Dorsolateral prefrontal cortex (tissue), 120 donors: ENCODE measurements at regions of chr19 and their contacts with region 1.

Region 1: GRCh38 chr19:44164673-44165512 is at the start of gene ZNF226:
- DNase-seq: peak; percentile 83 to 99 (median 95)
- H3K4me3 ChIP-seq: peak within 1 kb of the TSS; percentile 46 to 97 (median 84)
- H3K27ac ChIP-seq: peak within 1 kb of the TSS; percentile 51 to 96 (median 90)
- H3K27me3 ChIP-seq: no peaks in the 10 kb centered on the region
- CTCF ChIP-seq: peak in 33 of 56 donors; percentile 5 to 45 (median 27)
- total RNA-seq, gene ZNF226: 33.2 to 72.4 (median 51.4) TPM

Region 2: GRCh38 chr19:43983912-43984686 is 180.8 kb before region 1 on chr19 and contains the start of gene ZNF155:
- intact Hi-C with region 1: loop called in 1 of 2 experiments (anchors 5 kb)
- DNase-seq: peak; percentile 88 to 97 (median 95)
- H3K4me3 ChIP-seq: peak within 1 kb of the TSS; percentile 43 to 86 (median 73)
- H3K27ac ChIP-seq: peak within 1 kb of the TSS in 42 of 59 donors; percentile 1 to 84 (median 50)
- H3K27me3 ChIP-seq: no peaks in the 10 kb centered on the region
- CTCF ChIP-seq: peak in 10 of 56 donors; percentile 5 to 35 (median 14)
- total RNA-seq, gene ZNF155: 6.7 to 16.6 (median 10.8) TPM

Region 3: DNA sequence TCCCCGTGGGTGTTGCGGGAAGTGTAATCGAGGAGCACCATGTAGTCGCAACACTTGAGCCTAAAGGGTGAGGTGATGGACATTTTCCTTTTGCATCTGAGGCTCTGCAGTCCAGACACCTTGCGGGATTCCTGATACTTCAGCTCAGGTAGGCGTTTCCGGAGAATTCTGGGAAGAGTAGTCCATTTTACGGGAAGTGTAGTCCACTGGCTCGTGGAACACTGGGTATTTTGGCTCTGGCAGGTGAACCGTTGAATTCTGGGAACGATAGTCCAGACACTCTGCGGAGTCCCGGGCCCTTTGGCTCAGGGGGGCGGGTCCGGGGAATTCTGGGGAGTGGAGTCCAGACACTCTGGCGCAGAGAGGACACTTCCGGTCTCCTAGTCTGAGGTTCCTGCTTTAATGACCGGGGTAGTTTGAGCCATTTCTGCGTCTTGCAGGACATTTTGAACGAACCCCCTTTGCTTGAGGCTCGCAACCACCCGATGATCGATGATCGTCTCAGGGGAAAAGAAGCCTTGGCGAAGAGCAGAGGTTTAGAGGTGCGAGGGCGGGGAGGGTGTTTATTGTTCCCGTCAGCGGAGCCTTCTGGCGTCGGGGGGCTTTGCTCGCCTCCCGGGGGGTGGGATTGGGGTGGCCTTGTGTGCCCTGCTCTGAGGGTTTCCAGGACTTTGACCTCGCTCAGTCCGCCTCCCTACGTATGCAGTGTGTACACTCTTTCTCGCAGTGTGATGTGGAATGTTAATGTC is 113.1 kb before region 1 on chr19 and contains the start of gene ZNF223:
- intact Hi-C with region 1: loop called in 1 of 2 experiments (anchors 2 kb)
- DNase-seq: peak; percentile 90 to 98 (median 96)
- H3K4me3 ChIP-seq: peak within 1 kb of the TSS; percentile 59 to 95 (median 83)
- H3K27ac ChIP-seq: peak within 1 kb of the TSS in 51 of 59 donors; percentile 7 to 88 (median 71)
- H3K27me3 ChIP-seq: peaks cover 0 to 17% (median 0%) of the 10 kb centered on the region in 45 donors
- CTCF ChIP-seq: peak in 21 of 56 donors; percentile 7 to 45 (median 28)
- total RNA-seq, gene ZNF223: 5.2 to 18.6 (median 10.3) TPM

Region 4: GRCh38 chr19:44113138-44113783 is 51.6 kb before region 1 on chr19 and contains the start of gene ZNF225:
- intact Hi-C with region 1: loop called (anchors 1 to 5 kb)
- DNase-seq: peak; percentile 96 to 99 (median 98)
- H3K4me3 ChIP-seq: peak within 1 kb of the TSS; percentile 59 to 98 (median 82)
- H3K27ac ChIP-seq: peak within 1 kb of the TSS in 50 of 59 donors; percentile 9 to 90 (median 70)
- H3K27me3 ChIP-seq: no peaks in the 10 kb centered on the region
- CTCF ChIP-seq: peak in 40 of 56 donors; percentile 3 to 56 (median 36)
- total RNA-seq, gene ZNF225: 4.5 to 14.2 (median 8.2) TPM

Region 5: GRCh38 chr19:44131955-44132354 is 32.9 kb before region 1 on chr19:
- intact Hi-C with region 1: no loop called
- DNase-seq: no peak
- H3K4me3 ChIP-seq: no peak overlapping the region
- H3K27ac ChIP-seq: no peak overlapping the region
- H3K27me3 ChIP-seq: no peaks in the 10 kb centered on the region
- CTCF ChIP-seq: no peak

Region 6: DNA sequence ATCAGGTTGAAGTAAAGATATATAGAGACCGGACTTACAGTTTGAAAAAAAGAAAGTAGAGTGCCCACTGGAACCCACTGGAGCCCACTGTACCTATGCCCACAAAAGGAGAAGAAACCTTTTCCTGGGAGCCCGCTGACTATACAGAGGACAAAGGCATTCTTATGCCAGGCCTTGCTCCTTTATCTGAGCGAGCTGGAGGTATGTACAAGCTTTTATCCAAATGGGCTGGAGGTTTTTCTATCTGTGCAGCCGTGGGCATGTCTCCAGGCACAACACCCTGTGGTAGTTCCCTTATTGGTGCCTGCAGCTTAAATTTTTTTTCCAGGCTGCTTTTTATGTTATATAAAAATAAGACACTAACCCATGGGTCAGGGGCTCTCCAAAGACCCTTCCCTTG is 15.1 kb before region 1 on chr19:
- intact Hi-C with region 1: no loop called
- DNase-seq: no peak
- H3K4me3 ChIP-seq: no peak overlapping the region
- H3K27ac ChIP-seq: no peak overlapping the region
- H3K27me3 ChIP-seq: no peaks in the 10 kb centered on the region
- CTCF ChIP-seq: no peak

Region 7: DNA sequence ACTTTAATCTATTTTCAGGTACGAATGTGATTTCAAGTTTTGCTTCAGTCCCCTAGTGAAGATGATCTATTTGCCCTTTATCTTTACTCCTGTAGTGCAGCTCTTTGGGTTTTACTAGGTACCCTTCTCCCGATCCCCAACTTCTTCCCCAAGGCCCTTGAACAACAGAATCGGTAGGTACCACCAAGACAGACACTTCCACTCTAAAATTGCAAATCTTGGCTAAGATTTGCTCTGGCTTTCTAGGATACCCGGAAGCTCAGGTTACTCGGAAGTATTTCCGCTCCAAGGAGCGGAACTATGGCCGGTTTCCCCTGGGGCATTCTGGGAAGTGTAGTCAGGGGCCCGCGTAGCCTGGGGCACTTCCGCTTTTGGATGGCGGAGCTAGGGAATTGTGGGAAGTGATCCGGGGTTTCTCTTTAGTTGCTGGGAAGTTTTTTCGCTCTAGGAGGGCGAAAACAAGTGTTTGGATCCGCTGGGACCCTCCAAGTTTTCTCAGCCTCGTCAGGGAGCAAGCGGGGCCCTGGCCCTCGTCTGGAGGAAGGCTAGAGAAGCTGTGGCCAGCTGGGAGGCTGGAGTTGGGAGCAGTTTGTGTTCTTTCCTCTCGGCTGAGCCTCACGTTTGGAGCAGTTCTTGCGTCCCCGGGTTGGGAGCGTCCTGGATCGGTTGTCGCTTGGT is 42.4 kb after region 1 on chr19:
- intact Hi-C with region 1: loop called (anchors 1 kb)
- DNase-seq: peak; percentile 76 to 91 (median 88)
- H3K4me3 ChIP-seq: peak overlapping the region; percentile 62 to 99 (median 88)
- H3K27ac ChIP-seq: peak overlapping the region; percentile 1 to 98 (median 89)
- H3K27me3 ChIP-seq: peaks cover 0 to 5% (median 0%) of the 10 kb centered on the region in 45 donors
- CTCF ChIP-seq: peak in 21 of 56 donors; percentile 8 to 47 (median 21)

Region 8: DNA sequence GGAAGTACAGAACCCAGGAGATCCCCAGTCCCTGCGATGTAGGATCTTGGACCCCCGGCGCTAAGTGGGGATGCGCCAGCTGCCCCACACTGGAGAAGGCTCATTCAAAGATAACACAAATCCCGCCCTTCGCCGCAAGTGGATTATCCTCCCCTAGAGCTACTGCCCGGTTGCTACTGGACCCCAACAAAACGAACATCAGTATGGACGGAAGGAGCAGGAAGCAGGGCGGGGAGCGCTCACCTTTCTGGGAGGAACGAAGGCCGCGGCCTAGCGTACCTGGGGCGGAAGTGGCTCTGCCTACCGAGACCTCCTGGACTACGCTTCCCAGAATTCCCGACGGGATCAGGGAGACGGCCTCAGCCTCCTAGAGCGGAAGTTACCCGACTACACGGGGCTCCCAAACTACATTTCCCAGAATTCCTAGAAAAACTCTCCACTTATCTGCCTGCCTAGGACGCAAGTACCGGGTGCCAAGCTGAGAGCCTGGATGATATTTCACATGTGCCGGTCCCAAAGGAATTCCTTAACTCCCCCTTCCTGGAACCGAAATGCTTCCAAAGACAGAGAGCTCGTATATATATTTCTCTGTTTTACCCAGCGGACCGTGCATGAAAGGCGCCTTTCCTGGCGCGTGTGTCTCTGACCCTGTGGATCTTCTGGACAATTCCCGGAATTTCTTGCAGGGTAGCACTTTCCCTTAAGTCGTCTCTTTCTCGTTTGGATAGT is 191.7 kb after region 1 on chr19 and contains the start of gene ZNF112:
- intact Hi-C with region 1: loop called in 1 of 2 experiments (anchors 2 kb)
- DNase-seq: peak; percentile 82 to 95 (median 92)
- H3K4me3 ChIP-seq: peak within 1 kb of the TSS; percentile 57 to 87 (median 75)
- H3K27ac ChIP-seq: peak within 1 kb of the TSS in 50 of 59 donors; percentile 14 to 86 (median 70)
- H3K27me3 ChIP-seq: peaks cover 0 to 4% (median 0%) of the 10 kb centered on the region in 45 donors
- CTCF ChIP-seq: peak in 26 of 56 donors; percentile 4 to 43 (median 20)
- total RNA-seq, gene ZNF112: 8.1 to 22.7 (median 12.7) TPM